ENCODE measurements at regions of chr14 and their contacts with region 1.

Region 1: GRCh38 chr14:84323978-84324377 is 1206.0 kb upstream of the FLRT2 start:
- DNase-seq: no peak
- H3K4me3 ChIP-seq: no peak overlapping the region
- H3K4me3 Mint-ChIP-seq: no peak overlapping the region
- H3K27ac Mint-ChIP-seq: no peak overlapping the region
- H3K4me1 ChIP-seq: no peaks in the 10 kb centered on the region
- H3K4me1 Mint-ChIP-seq: no peaks in the 10 kb centered on the region
- H3K27me3 ChIP-seq: no peaks in the 10 kb centered on the region
- H3K27me3 Mint-ChIP-seq: no peaks in the 10 kb centered on the region
- CTCF ChIP-seq: no peak

Region 2: GRCh38 chr14:83300476-83301064 is 1023.4 kb before region 1 on chr14:
- CTCF ChIA-PET with region 1: no interaction called
- POLR2A ChIA-PET with region 1: no interaction called
- intact Hi-C with region 1: loop called (anchors 2 kb)
- DNase-seq: peak in 1 of 2 experiments; percentile 11
- H3K4me3 ChIP-seq: no peak overlapping the region
- H3K4me3 Mint-ChIP-seq: no peak overlapping the region
- H3K27ac Mint-ChIP-seq: no peak overlapping the region
- H3K4me1 ChIP-seq: no peaks in the 10 kb centered on the region
- H3K4me1 Mint-ChIP-seq: no peaks in the 10 kb centered on the region
- H3K27me3 ChIP-seq: no peaks in the 10 kb centered on the region
- H3K27me3 Mint-ChIP-seq: peaks cover 6% of the 10 kb centered on the region
- CTCF ChIP-seq: peak; percentile 56 to 80

Region 3: DNA sequence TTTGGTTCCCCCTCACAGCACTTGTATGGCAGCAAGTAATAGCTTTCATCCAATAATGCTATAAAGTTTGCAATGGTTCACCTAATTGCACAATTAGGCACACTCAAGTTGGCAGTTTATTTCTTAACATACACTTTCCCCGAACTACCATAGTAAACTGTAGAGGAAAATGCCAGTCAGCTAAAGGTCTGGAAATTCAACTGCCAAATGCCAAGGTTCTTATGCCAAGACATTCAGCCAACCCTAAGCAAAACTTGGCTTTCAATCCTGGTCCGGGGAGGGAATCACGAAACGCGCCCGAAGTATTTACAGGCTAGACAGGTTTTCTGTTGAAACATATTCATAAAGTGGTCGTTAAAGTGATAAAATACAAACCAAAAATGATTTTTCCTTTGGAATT is 306.5 kb before region 1 on chr14:
- CTCF ChIA-PET with region 1: interaction called, 14 read pairs
- POLR2A ChIA-PET with region 1: no interaction called
- intact Hi-C with region 1: no loop called
- DNase-seq: no peak
- H3K4me3 ChIP-seq: no peak overlapping the region
- H3K4me3 Mint-ChIP-seq: no peak overlapping the region
- H3K27ac Mint-ChIP-seq: no peak overlapping the region
- H3K4me1 ChIP-seq: no peaks in the 10 kb centered on the region
- H3K4me1 Mint-ChIP-seq: no peaks in the 10 kb centered on the region
- H3K27me3 ChIP-seq: no peaks in the 10 kb centered on the region
- H3K27me3 Mint-ChIP-seq: no peaks in the 10 kb centered on the region
- CTCF ChIP-seq: no peak

Region 4: GRCh38 chr14:84209021-84209420 is 115.0 kb before region 1 on chr14:
- CTCF ChIA-PET with region 1: no interaction called
- POLR2A ChIA-PET with region 1: no interaction called
- intact Hi-C with region 1: no loop called
- DNase-seq: no peak
- H3K4me3 ChIP-seq: no peak overlapping the region
- H3K4me3 Mint-ChIP-seq: no peak overlapping the region
- H3K27ac Mint-ChIP-seq: no peak overlapping the region
- H3K4me1 ChIP-seq: peaks cover under 1% of the 10 kb centered on the region; the same call in 1 of the 2 replicates
- H3K4me1 Mint-ChIP-seq: no peaks in the 10 kb centered on the region
- H3K27me3 ChIP-seq: no peaks in the 10 kb centered on the region
- H3K27me3 Mint-ChIP-seq: no peaks in the 10 kb centered on the region
- CTCF ChIP-seq: no peak

Measured in Caco-2 (cell line).